Esophagus squamous epithelium (tissue), 5 donors: ENCODE measurements at regions of chr2 and their contacts with region 1.

Region 1: GRCh38 chr2:42095923-42096408 is 48.1 kb downstream of the PKDCC start:
- DNase-seq: no peak
- H3K4me3 ChIP-seq: no peak overlapping the region
- H3K27ac ChIP-seq: no peak overlapping the region
- H3K4me1 ChIP-seq: peaks cover 3 to 51% (median 7%) of the 10 kb centered on the region in 3 donors
- H3K27me3 ChIP-seq: no peaks in the 10 kb centered on the region
- CTCF ChIP-seq: peak; percentile 55 to 92 (median 85)
- POLR2A ChIP-seq: no peak

Region 2: DNA sequence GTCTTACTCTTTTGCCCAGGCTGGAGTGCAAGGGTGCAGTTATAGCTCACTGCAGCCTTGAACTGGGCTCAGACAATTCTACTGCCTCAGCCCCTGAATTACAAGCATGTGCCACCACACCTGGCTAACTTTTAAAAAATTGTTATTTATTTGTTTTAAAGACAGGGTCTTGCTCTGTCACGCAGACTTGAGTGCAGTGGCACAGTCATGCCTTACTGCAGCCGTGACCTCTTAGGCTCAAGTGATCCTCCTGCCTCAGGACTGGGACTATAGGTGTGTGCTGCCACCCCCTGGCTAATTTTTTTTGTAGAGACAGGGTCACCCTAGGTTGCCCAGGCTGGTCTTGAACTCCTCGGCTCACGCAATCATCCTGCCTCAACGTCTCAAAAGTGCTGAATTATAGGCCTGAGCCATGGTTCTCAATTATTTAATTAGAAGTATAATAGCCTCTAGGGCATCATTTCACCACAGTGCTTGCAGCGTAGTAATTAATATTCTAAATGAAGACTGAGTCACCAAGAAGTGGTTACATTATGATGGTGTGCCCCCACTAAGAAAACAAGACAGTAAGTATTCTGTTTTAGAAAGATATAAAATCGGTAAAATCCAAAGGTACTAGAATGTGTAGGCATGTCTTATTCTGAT is 142.8 kb after region 1 on chr2:
- intact Hi-C with region 1: loop called (anchors 5 kb)
- DNase-seq: no peak
- H3K4me3 ChIP-seq: no peak overlapping the region
- H3K27ac ChIP-seq: no peak overlapping the region
- H3K4me1 ChIP-seq: peaks cover 0 to 19% (median 0%) of the 10 kb centered on the region in 3 donors
- H3K27me3 ChIP-seq: no peaks in the 10 kb centered on the region
- CTCF ChIP-seq: peak in 5 of 6 experiments; percentile 26 to 61 (median 51)
- POLR2A ChIP-seq: no peak

Region 3: DNA sequence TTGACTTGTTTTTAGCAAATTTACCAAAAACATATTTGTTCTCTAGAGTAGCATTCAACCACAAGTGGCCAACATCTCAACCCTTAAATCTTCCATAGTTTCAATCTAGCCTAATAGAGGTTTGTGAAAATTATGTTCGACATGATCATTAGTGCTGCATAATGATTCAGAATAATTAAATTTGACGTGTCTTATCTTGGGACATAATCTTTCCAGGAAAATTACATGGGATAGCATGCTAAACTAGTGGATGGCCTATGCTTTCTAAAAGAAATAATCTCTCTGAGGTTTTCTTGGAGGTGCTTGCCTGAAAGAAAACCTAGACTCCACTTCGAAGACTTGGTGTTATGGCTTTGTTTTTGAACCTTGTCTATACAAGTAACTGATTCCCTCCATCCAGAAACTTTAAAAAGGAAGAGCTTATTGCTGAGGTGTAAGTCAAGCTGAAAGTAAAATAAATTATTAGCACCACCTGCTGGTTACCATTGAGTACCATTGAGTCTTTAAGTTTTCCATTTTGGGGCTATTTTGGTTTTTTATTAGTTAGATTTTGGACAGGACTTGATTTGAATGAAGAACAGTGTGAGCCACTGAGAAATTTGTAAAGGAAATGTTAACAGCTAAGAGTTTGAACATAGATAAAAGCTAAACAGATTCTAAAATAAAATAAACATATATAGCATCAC is 232.3 kb after region 1 on chr2:
- intact Hi-C with region 1: loop called (anchors 10 kb)
- DNase-seq: no peak
- H3K4me3 ChIP-seq: no peak overlapping the region
- H3K27ac ChIP-seq: no peak overlapping the region
- H3K4me1 ChIP-seq: peaks cover 0 to 14% (median 0%) of the 10 kb centered on the region in 3 donors
- H3K27me3 ChIP-seq: no peaks in the 10 kb centered on the region
- CTCF ChIP-seq: peak in 5 of 6 experiments; percentile 36 to 59 (median 49)
- POLR2A ChIP-seq: no peak

Region 4: DNA sequence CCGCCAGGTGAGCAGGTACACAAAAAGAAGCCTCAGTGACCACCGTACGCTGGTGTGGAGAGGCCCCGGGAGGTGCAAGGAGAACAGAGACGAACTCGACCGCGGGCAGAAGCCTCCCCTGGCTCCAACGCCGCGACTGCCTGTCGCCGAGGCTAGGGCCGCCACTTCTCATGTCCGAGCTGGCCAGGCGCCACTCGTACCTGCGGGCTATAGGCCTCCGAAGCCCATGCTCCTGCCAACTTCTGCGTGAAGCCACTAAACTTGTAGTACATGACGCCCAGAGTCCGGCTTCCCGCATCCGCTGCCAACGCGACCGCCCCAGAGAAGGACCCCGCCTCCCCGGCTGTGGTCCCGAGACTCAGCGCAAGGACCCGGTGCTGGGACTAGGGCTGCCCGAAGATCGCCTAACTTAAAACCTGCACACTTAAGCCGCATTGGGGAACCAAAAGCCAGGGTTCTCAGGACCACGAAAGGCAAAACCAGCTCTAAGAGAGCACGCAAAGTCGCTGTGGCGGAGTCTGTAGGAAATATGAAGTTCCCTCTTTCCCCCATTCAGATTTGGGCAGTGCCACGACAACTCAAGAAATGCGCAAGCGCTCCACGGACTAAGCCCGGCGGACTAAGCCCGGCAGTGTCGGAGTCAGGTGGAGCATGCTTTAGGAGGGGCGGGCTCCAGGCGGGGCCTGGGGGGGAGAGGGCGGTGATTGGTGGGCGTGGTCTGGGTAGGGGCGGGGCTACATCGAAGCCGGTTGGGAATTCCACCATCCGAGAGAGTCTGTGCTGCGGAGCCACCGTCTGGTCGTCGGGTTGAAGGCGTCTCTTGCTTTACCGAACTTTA is 265.1 kb after region 1 on chr2 and contains the start of gene COX7A2L:
- intact Hi-C with region 1: loop called (anchors 10 kb)
- DNase-seq: peak; percentile 75
- H3K4me3 ChIP-seq: peak within 1 kb of the TSS; percentile 93 to 98 (median 94)
- H3K27ac ChIP-seq: peak within 1 kb of the TSS; percentile 90 to 97 (median 96)
- H3K4me1 ChIP-seq: peaks cover 14 to 44% (median 30%) of the 10 kb centered on the region in 3 donors
- H3K27me3 ChIP-seq: no peaks in the 10 kb centered on the region
- CTCF ChIP-seq: peak in 4 of 6 experiments; percentile 2 to 21 (median 13)
- POLR2A ChIP-seq: peak in 3 of 4 donors; percentile 38 to 80 (median 68)
- total RNA-seq, gene COX7A2L: 51.3 to 152 (median 104) TPM